Naive thymus-derived CD4-positive, alpha-beta T cell (primary cell): ENCODE measurements at regions of chr1 and their contacts with region 1.

Region 1: GRCh38 chr1:206982216-206982615 is 12.0 kb upstream of the FCAMR start:
- DNase-seq: peak; percentile 29 to 64 (median 52)
- ATAC-seq: peak; percentile 83
- H3K4me3 ChIP-seq: no peak overlapping the region
- H3K4me3 Mint-ChIP-seq: no peak overlapping the region
- H3K27ac ChIP-seq: no peak overlapping the region
- H3K27ac Mint-ChIP-seq: no peak overlapping the region
- H3K4me1 ChIP-seq: no peaks in the 10 kb centered on the region
- H3K4me1 Mint-ChIP-seq: peaks cover 0 to 3% (median 0%) of the 10 kb centered on the region in 7 donors
- H3K27me3 ChIP-seq: peaks cover 0 to 4% of the 10 kb centered on the region in 2 donors
- H3K27me3 Mint-ChIP-seq: peaks cover 0 to 59% (median 14%) of the 10 kb centered on the region in 5 donors

Region 2: GRCh38 chr1:205983925-205984725 is 998.1 kb before region 1 on chr1:
- CTCF ChIA-PET with region 1: no interaction called
- POLR2A ChIA-PET with region 1: no interaction called
- intact Hi-C with region 1: no loop called
- DNase-seq: no peak
- ATAC-seq: peak; percentile 41
- H3K4me3 ChIP-seq: no peak overlapping the region
- H3K4me3 Mint-ChIP-seq: no peak overlapping the region
- H3K27ac ChIP-seq: no peak overlapping the region
- H3K27ac Mint-ChIP-seq: peak overlapping the region in 1 of 9 donors; percentile 10
- H3K4me1 ChIP-seq: no peaks in the 10 kb centered on the region
- H3K4me1 Mint-ChIP-seq: no peaks in the 10 kb centered on the region
- H3K27me3 ChIP-seq: no peaks in the 10 kb centered on the region
- H3K27me3 Mint-ChIP-seq: peaks cover 0 to 1% (median 0%) of the 10 kb centered on the region in 5 donors

Region 3: DNA sequence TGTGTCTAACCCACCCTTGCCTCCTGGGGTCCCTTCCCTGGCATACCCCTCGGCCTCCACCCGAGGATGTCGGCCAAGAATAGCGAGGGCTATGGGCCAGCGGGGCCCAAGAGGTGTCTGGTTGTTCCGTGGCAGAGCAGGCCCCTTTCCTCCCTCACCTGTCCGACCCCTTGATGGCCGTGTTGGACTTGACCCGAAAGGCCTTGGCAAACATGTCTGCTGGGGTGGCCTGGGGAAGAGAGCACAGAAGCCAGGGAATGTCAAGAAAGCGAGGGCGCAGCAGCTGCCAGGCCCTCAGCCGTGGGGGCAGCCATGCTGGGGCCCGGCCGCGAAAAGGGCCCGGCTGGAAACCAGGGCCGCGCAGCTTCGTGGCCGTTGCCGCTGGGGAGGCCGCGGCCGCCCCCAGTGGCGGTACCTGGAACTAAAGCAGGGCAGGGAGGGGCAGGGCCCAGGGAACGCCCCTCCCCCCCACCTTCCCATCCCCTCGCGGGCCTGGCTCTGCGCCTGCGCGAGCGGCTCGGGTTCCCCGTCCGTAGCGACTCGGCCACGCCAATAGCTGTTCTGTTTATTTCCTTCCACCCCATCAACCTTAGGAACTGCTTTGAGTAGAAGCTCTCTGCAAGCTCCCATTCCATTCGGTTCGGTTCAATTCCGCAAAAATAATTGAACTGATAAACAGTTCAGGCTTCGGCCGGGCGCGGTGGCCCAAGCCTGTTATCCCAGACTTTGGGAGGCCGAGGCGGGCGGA is 369.9 kb before region 1 on chr1 and contains the start of gene EIF2D:
- CTCF ChIA-PET with region 1: interaction called, 8 read pairs
- POLR2A ChIA-PET with region 1: no interaction called
- intact Hi-C with region 1: loop called (anchors 1 to 2 kb)
- DNase-seq: peak; percentile 88 to 98 (median 94)
- ATAC-seq: peak; percentile 100
- H3K4me3 ChIP-seq: peak within 1 kb of the TSS; percentile 97
- H3K4me3 Mint-ChIP-seq: peak within 1 kb of the TSS; percentile 89 to 95 (median 93)
- H3K27ac ChIP-seq: peak within 1 kb of the TSS; percentile 88
- H3K27ac Mint-ChIP-seq: peak within 1 kb of the TSS; percentile 92 to 99 (median 94)
- H3K4me1 ChIP-seq: peaks cover 8 to 10% of the 10 kb centered on the region in 2 donors
- H3K4me1 Mint-ChIP-seq: peaks cover 7 to 35% (median 30%) of the 10 kb centered on the region in 7 donors
- H3K27me3 ChIP-seq: no peaks in the 10 kb centered on the region
- H3K27me3 Mint-ChIP-seq: peaks cover 0 to 17% (median 0%) of the 10 kb centered on the region in 5 donors
- total RNA-seq, gene EIF2D: 38.7 to 73.0 (median 59.6) TPM

Region 4: DNA sequence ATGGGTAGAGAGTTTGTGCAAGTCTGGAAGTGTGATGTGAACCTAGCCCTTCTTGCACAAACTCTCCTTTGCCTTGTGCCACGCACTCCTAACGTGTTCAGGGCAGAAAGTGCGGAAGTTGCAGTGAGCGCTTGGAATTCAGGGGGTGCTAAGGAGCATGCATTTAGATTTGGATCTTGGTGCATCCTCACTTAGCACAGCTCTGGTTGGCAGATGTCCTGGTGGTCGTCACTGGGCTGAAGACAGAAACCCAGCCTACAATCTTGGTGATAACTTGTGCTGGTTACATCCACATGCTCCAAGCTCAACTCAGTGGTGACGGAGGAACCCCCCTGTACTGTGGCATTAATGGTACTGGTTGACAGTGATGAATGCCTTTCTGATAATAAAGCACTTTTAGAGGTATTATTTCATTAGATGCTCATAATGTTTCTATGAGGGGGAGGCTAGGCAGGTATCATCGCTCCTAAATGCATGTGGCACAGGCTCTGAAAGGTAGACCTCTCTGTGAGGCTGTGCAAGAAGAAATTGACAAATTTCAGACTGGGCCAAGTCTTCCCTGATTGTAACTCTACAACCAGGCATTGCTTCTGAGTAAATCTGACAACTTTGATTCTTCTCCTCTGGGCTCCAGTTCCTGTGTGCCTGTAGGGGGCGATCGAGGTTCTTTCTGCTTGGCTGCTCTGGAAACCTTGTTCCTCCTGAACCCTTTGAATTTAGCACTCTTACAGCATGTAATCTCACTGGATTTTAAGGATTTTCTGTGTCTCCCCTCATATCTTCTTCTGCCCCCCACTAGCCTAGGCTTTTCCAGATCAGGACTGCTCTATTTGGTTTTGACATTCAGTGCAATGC is 256.9 kb before region 1 on chr1:
- CTCF ChIA-PET with region 1: interaction called, 61 read pairs
- POLR2A ChIA-PET with region 1: no interaction called
- intact Hi-C with region 1: loop called (anchors 1 kb)
- DNase-seq: peak in 8 of 9 donors; percentile 35 to 64 (median 58)
- ATAC-seq: peak; percentile 61
- H3K4me3 ChIP-seq: no peak overlapping the region
- H3K4me3 Mint-ChIP-seq: no peak overlapping the region
- H3K27ac ChIP-seq: no peak overlapping the region
- H3K27ac Mint-ChIP-seq: peak overlapping the region in 8 of 9 donors; percentile 19 to 90 (median 58)
- H3K4me1 ChIP-seq: peaks cover 17 to 25% of the 10 kb centered on the region in 2 donors
- H3K4me1 Mint-ChIP-seq: peaks cover 29 to 50% (median 46%) of the 10 kb centered on the region in 7 donors
- H3K27me3 ChIP-seq: no peaks in the 10 kb centered on the region
- H3K27me3 Mint-ChIP-seq: no peaks in the 10 kb centered on the region

Region 5: DNA sequence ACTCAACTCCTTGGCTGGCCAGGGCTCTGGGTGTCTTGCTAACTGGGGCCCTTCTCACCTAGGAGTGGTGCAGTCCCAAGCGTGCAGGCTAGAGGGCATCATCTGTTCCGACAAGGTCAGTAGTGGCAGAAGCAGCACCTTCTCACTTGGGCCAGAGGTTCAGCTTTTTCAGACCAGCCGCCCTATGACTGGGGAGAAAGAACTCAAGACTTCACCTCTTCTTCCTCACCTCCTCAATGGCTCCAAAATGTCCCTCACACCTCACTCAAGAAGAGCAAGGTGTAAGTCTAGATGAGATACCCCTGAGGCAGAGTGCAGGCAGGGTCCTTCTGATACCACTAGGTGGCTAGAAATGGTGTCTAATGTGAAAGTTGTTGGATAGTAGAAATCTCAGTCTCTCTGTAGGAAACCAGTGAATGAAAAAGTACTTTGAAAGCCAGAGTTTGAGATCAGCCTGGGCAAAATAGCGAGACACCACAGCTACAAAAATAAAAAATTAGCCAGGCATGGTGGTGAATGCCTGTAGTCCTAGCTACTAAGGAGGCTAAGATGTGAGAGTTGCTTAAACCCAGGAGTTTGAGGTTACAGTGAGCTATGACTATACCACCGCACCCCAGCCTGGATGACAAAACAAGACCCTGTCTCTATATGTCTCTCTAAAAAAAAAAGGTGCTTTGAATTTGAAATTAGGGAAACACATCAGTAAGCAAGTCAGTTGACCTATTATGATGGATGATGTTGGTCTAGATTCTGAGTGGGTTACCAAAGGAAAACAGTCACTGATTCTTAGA is 125.3 kb before region 1 on chr1:
- CTCF ChIA-PET with region 1: no interaction called
- POLR2A ChIA-PET with region 1: no interaction called
- intact Hi-C with region 1: loop called in 1 of 2 experiments (anchors 2 kb)
- DNase-seq: peak in 5 of 9 donors; percentile 19 to 32 (median 28)
- ATAC-seq: peak; percentile 54
- H3K4me3 ChIP-seq: no peak overlapping the region
- H3K4me3 Mint-ChIP-seq: no peak overlapping the region
- H3K27ac ChIP-seq: no peak overlapping the region
- H3K27ac Mint-ChIP-seq: peak overlapping the region in 1 of 9 donors; percentile 55
- H3K4me1 ChIP-seq: peaks cover 0 to 15% of the 10 kb centered on the region in 2 donors
- H3K4me1 Mint-ChIP-seq: peaks cover 7 to 31% (median 24%) of the 10 kb centered on the region in 7 donors
- H3K27me3 ChIP-seq: no peaks in the 10 kb centered on the region
- H3K27me3 Mint-ChIP-seq: peaks cover 0 to 32% (median 0%) of the 10 kb centered on the region in 5 donors

Region 6: GRCh38 chr1:206912445-206913095 is 69.6 kb before region 1 on chr1:
- CTCF ChIA-PET with region 1: interaction called, 40 read pairs
- POLR2A ChIA-PET with region 1: interaction called, 15 read pairs
- intact Hi-C with region 1: loop called (anchors 1 kb)
- DNase-seq: peak; percentile 26 to 73 (median 67)
- ATAC-seq: peak; percentile 73
- H3K4me3 ChIP-seq: no peak overlapping the region
- H3K4me3 Mint-ChIP-seq: peak overlapping the region in 3 of 10 donors; percentile 67 to 85 (median 75)
- H3K27ac ChIP-seq: peak overlapping the region; percentile 90
- H3K27ac Mint-ChIP-seq: peak overlapping the region in 4 of 9 donors; percentile 83 to 96 (median 92)
- H3K4me1 ChIP-seq: peaks cover 59 to 93% of the 10 kb centered on the region in 2 donors
- H3K4me1 Mint-ChIP-seq: peaks cover 73 to 94% (median 92%) of the 10 kb centered on the region in 7 donors
- H3K27me3 ChIP-seq: no peaks in the 10 kb centered on the region
- H3K27me3 Mint-ChIP-seq: peaks cover 0 to 6% (median 0%) of the 10 kb centered on the region in 5 donors

Region 7: DNA sequence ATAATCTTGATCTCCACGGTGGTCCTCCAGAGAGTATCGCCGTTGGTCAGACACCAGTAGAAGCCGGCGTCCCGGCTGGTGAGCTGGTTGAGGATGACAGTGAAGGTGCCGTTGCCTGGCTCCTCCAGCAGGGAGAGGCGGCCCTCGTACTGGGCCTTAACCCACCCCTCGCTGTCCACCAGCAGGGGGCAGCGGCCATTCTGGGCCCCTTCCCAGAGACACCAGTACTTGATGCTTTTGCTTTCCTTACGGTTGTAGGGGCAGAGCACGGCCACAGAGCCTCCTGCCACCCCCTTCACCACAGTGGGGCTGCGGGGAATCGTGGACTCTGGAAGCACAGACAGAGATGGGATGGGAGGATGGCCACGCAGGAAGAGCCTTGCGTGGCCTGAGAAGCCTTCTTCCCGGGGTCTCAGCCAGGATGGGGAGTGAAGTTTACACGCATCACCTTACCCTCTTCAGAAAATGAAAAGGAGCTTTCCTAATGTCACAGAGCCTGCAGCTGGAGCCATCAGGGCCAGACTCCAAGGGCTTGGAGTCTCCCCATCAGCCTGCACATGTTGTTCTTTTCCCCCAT is 46.6 kb before region 1 on chr1:
- CTCF ChIA-PET with region 1: interaction called, 93 read pairs
- POLR2A ChIA-PET with region 1: interaction called, 3 read pairs
- intact Hi-C with region 1: loop called (anchors 1 kb)
- DNase-seq: peak in 4 of 9 donors; percentile 28 to 56 (median 48)
- ATAC-seq: peak; percentile 68
- H3K4me3 ChIP-seq: no peak overlapping the region
- H3K4me3 Mint-ChIP-seq: no peak overlapping the region
- H3K27ac ChIP-seq: no peak overlapping the region
- H3K27ac Mint-ChIP-seq: peak overlapping the region in 1 of 9 donors; percentile 12
- H3K4me1 ChIP-seq: peaks cover 6 to 12% of the 10 kb centered on the region in 2 donors
- H3K4me1 Mint-ChIP-seq: peaks cover 2 to 31% (median 29%) of the 10 kb centered on the region in 7 donors
- H3K27me3 ChIP-seq: no peaks in the 10 kb centered on the region
- H3K27me3 Mint-ChIP-seq: peaks cover 0 to 8% (median 0%) of the 10 kb centered on the region in 5 donors

Region 8: GRCh38 chr1:207077470-207078377 is 95.5 kb after region 1 on chr1:
- CTCF ChIA-PET with region 1: no interaction called
- POLR2A ChIA-PET with region 1: no interaction called
- intact Hi-C with region 1: loop called in 1 of 2 experiments (anchors 1 kb)
- DNase-seq: peak; percentile 21 to 85 (median 78)
- ATAC-seq: peak; percentile 98
- H3K4me3 ChIP-seq: no peak overlapping the region
- H3K4me3 Mint-ChIP-seq: no peak overlapping the region
- H3K27ac ChIP-seq: no peak overlapping the region
- H3K27ac Mint-ChIP-seq: peak overlapping the region in 3 of 9 donors; percentile 5 to 63 (median 28)
- H3K4me1 ChIP-seq: no peaks in the 10 kb centered on the region
- H3K4me1 Mint-ChIP-seq: peaks cover 0 to 14% (median 5%) of the 10 kb centered on the region in 7 donors
- H3K27me3 ChIP-seq: no peaks in the 10 kb centered on the region
- H3K27me3 Mint-ChIP-seq: peaks cover 0 to 52% (median 0%) of the 10 kb centered on the region in 5 donors

Region 9: GRCh38 chr1:207115269-207115668 is 133.1 kb after region 1 on chr1:
- CTCF ChIA-PET with region 1: no interaction called
- POLR2A ChIA-PET with region 1: no interaction called
- intact Hi-C with region 1: no loop called
- DNase-seq: no peak
- ATAC-seq: no peak
- H3K4me3 ChIP-seq: no peak overlapping the region
- H3K4me3 Mint-ChIP-seq: no peak overlapping the region
- H3K27ac ChIP-seq: no peak overlapping the region
- H3K27ac Mint-ChIP-seq: no peak overlapping the region
- H3K4me1 ChIP-seq: no peaks in the 10 kb centered on the region
- H3K4me1 Mint-ChIP-seq: no peaks in the 10 kb centered on the region
- H3K27me3 ChIP-seq: no peaks in the 10 kb centered on the region
- H3K27me3 Mint-ChIP-seq: peaks cover 0 to 25% (median 4%) of the 10 kb centered on the region in 5 donors